ENCODE measurements at regions of chr3 and their contacts with region 1.

Region 1: GRCh38 chr3:48635222-48636021 is at the start of gene SLC26A6:
- DNase-seq: peak; percentile 73
- H3K4me3 ChIP-seq: peak within 1 kb of the TSS; percentile 88
- H3K27me3 ChIP-seq: no peaks in the 10 kb centered on the region
- CTCF ChIP-seq: peak; percentile 78
- polyA plus RNA-seq, gene SLC26A6: 26.4 and 45.8 TPM in 2 replicates

Region 2: DNA sequence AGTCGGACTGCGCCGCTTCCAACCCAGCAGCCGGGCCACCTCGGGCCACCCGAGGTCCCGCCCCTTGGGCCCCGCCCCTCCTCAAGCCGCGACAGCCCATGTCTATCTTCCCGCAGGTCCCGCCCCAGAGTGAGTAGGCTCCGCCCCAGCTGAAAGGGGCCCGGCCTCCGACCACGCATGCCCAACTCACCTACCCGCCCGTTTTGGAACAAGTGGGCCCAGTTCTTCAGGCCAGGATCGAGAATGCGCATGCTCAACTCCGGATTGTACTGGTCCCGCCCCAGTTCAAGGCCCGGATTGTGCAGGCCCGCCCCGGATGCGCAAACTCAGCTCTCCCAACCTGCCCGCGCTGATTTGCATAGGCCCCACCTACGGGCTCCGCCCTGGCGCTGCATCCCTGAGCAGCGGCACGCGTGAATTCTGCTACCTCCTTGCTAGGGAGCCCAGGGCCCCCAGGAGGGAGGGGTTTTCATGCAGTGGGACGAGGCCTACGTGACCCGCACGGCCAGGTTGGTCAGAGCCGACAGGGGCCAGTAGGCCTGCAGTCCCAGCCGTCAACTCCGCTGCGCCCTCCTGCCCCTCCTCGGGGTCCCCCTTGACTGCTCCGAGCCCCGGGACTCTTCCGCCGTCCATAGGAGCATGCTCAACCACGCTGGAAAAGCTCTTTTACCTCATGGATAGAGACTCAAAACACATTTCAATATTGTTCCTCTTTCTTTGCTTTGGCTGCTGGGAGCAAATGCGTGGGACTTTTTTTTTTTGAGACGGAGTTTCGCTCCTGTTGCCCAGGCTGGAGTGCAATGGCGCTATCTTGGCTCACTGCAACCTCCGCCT is 78.4 kb before region 1 on chr3 and contains the start of gene PFKFB4:
- CTCF ChIA-PET with region 1: interaction called, 21 read pairs
- POLR2A ChIA-PET with region 1: interaction called, 3 read pairs
- DNase-seq: peak; percentile 97
- H3K4me3 ChIP-seq: peak within 1 kb of the TSS; percentile 89
- H3K27me3 ChIP-seq: no peaks in the 10 kb centered on the region
- CTCF ChIP-seq: peak; percentile 10; the same call in 1 of the 2 replicates
- polyA plus RNA-seq, gene PFKFB4: 9.8 and 12.8 TPM in 2 replicates

Region 3: DNA sequence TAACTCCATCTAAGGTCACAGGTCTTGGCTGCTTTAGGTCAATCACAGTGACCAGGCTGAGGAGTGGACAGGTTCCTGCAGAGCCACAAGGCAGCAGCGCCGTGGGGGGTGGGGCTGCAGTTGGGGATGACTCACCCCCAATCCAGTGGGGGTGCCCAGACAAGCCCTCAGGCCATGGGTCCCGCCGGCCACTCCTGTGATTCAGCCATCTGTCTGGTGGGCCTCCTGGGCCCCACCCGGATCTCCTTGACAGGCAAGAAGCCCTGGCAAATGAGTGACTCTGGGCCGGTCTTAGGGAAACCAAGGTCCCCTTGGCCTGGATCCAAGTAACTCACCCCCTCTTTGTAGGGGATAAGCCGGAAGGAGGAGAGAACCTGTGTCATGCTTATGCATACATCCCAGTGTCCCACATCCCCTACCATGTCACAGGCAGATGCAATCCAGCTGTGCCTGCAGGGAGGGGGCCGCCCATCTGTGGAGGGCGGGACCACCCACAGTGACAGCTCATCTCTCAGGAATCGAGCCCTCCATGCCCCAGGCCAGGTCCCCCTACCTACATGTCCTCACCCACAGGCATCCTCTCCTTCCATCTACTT is 39.8 kb before region 1 on chr3:
- CTCF ChIA-PET with region 1: interaction called, 15 read pairs
- POLR2A ChIA-PET with region 1: no interaction called
- DNase-seq: peak; percentile 80
- H3K4me3 ChIP-seq: peak overlapping the region; percentile 61; the same call in 1 of the 2 replicates
- H3K27me3 ChIP-seq: no peaks in the 10 kb centered on the region
- CTCF ChIP-seq: no peak

Region 4: DNA sequence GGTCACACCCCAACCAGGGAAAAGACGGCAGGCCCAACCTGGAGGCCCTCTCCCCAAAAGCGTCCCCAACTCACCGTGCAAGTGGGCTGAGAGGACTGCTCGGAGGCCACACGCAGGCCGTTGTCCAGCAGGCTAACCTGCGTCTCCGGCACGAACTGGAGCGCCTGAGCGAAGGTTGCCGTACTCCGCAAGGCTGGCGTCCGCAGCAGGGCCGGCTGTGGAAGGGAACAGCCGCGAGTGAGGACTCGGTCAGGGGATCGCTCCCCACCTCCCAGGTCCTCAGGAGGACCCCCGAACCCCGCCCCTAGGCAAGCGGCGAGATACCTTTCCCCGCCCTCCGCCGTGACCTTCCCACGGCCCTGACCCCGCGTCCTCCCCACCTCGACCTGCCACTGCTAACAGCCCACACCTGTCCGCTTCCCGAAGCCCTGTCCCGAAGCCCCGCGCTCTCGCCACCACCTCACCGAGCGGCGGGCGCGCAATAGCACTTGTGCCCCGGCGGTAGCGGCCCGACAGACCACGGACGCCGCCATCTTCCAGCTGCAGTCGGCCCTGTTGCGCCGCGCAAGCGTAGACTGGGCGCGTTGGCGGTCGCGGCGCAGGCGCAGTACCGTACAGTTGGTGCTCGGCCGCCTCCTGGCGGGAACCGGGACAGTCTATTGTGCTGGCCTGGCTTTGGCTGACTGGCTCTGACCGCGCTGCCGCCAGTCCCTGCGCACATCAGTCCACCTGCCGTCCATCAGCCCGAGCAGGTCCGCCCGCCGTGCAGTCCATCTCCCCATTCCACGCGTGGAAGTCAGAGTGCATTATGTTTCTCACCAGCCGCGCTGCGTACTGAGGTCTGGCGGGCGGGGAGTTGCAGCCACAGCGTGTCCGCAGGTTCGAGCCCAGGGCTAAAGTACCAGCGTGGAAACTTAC is 26.1 kb before region 1 on chr3 and contains the start of gene UQCRC1:
- CTCF ChIA-PET with region 1: interaction called, 29 read pairs
- POLR2A ChIA-PET with region 1: no interaction called
- DNase-seq: peak; percentile 53
- H3K4me3 ChIP-seq: peak within 1 kb of the TSS; percentile 90
- H3K27me3 ChIP-seq: no peaks in the 10 kb centered on the region
- CTCF ChIP-seq: peak; percentile 78
- polyA plus RNA-seq, gene UQCRC1: 426 and 662 TPM in 2 replicates

Region 5: GRCh38 chr3:48623851-48624547 is 11.4 kb before region 1 on chr3:
- CTCF ChIA-PET with region 1: interaction called, 36 read pairs
- POLR2A ChIA-PET with region 1: interaction called, 6 read pairs
- DNase-seq: no peak
- H3K4me3 ChIP-seq: no peak overlapping the region
- H3K27me3 ChIP-seq: no peaks in the 10 kb centered on the region
- CTCF ChIP-seq: no peak

Region 6: DNA sequence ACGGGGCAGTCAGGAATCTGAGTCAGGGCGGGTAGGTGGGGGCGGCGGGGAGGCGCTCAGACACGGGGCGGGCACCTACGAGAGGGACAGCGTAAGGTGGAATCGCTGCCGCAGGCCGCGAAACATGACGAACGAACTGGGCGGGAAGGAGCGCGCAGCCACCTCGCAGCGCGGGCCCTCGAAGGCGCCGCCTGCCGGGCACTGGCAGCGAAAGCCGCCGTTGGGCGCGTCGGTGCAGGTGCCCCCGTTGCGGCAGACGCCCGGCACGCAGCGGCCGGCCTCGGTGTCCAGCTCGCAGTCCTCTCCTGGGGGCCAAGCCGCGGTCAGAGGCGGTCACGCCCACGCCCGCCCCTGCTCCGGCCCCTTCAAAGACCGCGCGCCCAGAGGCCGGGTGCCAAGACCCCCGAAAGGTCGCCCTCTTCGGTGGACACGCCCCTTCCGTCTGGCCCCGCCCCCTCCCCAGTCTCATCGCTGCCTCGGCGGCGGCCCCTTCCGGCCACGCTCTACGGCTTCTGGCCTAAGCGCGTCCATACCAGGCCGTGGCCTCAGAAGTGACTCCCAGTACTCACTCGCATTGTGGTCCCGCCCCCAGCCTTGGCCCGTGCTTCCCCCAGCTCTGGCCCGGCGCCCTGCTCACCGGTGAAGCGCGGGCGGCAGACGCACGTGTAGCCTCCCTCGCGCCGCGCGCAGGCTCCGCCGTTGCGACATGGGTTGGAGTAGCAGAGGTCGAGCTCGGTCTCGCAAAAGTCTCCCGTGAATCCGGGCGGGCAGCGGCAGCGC is 20.8 kb after region 1 on chr3:
- CTCF ChIA-PET with region 1: interaction called, 32 read pairs
- POLR2A ChIA-PET with region 1: interaction called, 4 read pairs
- DNase-seq: no peak
- H3K4me3 ChIP-seq: peak overlapping the region; percentile 51
- H3K27me3 ChIP-seq: no peaks in the 10 kb centered on the region
- CTCF ChIP-seq: peak; percentile 45

Region 7: GRCh38 chr3:48663415-48664312 is 28.2 kb after region 1 on chr3:
- CTCF ChIA-PET with region 1: interaction called, 32 read pairs
- POLR2A ChIA-PET with region 1: interaction called, 4 read pairs
- DNase-seq: peak; percentile 96
- H3K4me3 ChIP-seq: peak overlapping the region; percentile 49
- H3K27me3 ChIP-seq: no peaks in the 10 kb centered on the region
- CTCF ChIP-seq: peak; percentile 90